Astrocyte of the spinal cord (primary cell): ENCODE measurements at regions of chr12 and their contacts with region 1.

Region 1: DNA sequence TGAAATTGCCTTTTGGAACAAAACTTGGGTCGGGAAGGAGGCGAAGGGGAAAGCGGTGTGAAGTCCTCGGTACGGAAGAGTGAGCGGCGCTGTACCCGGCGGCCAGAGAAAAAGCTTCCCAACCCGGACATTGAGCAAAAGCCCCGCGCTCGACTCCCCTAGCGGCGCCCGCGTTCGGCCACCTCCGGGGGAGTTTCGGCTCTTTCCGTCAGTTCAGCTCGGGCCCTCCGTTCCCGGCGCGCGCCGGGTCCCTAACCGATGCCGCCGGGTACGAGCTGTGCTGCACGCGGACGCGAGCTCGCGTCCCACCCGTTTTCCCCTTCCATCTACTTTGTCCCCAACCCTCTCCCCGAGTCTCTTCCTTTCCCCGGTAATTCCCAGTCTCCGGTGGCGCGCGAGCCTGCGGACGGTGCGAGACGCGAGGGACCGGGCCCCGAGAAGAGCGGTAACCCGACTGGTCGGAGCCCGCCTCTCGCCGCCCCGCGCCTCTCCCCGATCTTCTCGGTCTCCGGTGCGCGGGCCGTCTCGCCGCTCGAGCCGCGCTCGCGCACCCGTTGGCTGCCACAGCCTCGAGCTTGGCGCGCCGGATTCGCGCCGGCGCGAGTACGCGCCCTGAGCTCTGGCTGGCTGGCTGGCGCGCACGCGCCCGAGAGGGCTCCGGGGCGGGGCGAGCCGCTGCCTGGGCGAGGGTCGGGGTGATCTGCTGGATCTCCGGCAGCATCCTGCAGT is 446 bp upstream of the SPATS2 start:
- DNase-seq: peak; percentile 98
- H3K4me3 ChIP-seq: peak overlapping the region; percentile 64
- CTCF ChIP-seq: peak; percentile 31

Region 2: DNA sequence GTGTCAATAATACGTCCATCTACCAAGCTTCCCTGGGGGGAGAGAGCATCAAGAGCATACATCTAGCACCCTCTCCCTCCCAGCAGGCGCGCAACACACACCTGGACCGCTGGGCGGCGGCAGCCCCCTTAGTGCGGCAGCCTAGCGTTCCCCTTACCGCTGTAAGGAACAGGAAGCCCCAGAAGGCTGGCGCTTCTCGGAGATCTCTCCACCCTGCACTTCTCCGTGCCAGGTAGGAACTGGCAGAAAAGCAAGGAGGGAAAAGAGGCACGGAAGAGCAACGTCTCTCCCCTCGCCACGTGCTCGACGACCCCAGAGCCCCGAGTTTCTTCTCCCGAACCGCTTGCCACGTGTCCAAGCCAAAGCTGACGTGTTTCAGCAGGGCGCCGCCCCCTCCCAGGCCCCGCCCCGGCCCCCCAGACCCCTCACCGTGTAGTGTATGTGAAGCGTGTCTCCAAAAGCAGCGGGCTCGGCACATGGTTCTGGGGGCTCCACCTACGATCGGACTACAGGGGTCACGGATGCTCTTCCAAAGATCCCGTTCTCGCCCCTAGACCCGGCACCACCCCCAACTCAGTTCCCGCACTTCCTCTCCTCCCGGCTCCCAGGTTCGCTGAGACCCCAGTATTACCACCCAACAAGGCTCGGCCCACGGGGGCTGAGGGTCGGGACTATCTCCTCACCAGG is 442.1 kb before region 1 on chr12:
- in situ Hi-C with region 1: no loop called
- DNase-seq: peak; percentile 51
- H3K4me3 ChIP-seq: peak overlapping the region; percentile 94
- CTCF ChIP-seq: peak; percentile 68

Region 3: GRCh38 chr12:49161092-49161795 is 205.6 kb before region 1 on chr12:
- in situ Hi-C with region 1: no loop called
- DNase-seq: no peak
- H3K4me3 ChIP-seq: no peak overlapping the region
- CTCF ChIP-seq: no peak

Region 4: DNA sequence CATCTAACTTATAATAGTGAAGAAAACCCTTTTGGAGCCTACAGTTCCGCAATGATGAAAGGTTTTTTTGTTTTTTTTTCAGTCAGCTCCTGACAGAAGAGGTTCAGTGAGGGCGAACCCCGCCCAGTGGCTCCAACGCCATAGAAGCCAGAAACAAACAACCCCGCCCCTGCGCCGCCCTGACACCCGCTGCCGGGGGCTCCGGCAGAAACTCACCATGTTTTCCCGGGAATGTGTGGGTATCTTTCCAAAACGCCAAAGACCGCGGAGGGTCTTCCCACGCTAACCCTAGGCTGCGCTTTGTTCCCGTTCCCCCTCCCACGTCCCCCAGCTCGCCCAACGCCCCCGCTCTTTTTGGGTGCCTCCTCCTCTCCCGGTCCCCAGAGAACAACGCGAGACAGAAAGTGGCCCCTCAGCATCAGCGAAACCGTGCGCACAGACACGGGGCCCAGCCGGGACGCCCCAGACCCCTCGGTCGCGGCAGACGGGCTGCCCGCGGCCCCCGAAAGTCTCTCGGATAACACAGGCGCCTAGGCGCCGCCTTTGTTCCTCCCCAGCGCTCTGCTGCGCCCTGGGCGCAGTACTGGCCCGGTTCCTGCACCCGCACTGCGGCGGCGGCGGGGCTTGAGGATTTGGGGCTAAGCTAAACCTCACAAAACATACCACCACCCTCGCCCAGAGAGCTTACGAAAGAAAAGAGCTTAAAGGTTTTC is 178.5 kb before region 1 on chr12:
- in situ Hi-C with region 1: no loop called
- DNase-seq: no peak
- H3K4me3 ChIP-seq: peak overlapping the region; percentile 99
- CTCF ChIP-seq: no peak

Region 5: DNA sequence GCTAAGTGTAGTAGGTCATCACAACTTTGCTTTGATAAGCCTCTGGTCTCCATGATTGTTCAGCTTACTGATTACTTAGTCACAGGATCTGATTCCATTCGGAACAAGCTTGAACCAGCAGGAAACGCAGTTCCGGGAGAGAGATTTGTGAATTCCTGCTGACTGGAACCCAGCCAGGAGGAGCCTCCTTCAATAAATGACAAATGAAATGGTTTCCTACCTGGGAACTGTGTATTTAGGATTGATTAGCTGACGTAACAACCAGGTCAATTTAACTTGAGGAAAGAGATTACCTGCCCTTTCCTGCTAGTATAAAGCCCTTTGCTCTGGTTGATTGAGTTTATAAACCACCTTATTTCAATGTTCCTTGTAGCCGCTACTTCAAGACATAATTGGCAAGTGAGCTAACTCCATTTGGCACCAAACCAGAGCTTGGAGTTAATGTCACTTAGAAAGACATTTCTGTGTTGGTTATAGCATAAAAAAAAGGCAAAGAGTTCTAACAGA is 136.9 kb after region 1 on chr12:
- in situ Hi-C with region 1: loop called (anchors 25 kb)
- DNase-seq: peak; percentile 68
- H3K4me3 ChIP-seq: no peak overlapping the region
- CTCF ChIP-seq: no peak

Region 6: DNA sequence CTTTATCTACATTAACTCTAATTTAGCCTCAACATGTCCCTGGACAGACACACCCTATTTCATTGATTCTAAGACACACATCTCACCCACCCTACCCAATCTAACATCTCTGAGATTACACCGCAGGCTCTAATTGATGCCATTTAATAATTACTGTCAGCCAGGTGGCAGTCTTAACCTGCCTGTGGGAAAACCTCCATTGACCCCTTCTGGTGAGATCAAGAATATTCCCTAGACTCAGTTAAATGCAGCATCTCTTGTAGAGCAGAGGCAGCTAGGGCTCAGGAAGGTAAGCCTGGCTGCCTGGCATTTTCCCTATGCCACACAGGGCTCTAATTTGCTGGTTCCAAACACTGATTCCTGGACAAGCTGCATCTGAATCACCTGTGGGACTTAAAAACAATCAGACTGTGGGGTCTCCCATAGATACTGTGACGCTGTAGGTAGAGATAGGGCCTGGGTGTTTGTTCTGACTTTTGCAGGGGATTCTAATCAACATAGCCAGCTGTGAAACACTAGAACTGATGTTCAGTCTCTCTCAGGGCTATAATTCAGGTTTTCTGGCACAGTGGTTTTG is 186.8 kb after region 1 on chr12:
- in situ Hi-C with region 1: no loop called
- DNase-seq: peak; percentile 17
- H3K4me3 ChIP-seq: no peak overlapping the region
- CTCF ChIP-seq: no peak